Activated naive CD4-positive, alpha-beta T cell treated with anti-CD3 and anti-CD28 coated beads for 36 hours (primary cell): ENCODE measurements at regions of chr4 and their contacts with region 1.

Region 1: GRCh38 chr4:1351854-1352633 is 5.0 kb downstream of the UVSSA start:
- DNase-seq: peak; percentile 95
- H3K4me3 Mint-ChIP-seq: no peak overlapping the region
- H3K27ac Mint-ChIP-seq: no peak overlapping the region
- H3K4me1 Mint-ChIP-seq: peaks cover 30% of the 10 kb centered on the region
- H3K27me3 Mint-ChIP-seq: no peaks in the 10 kb centered on the region

Region 2: DNA sequence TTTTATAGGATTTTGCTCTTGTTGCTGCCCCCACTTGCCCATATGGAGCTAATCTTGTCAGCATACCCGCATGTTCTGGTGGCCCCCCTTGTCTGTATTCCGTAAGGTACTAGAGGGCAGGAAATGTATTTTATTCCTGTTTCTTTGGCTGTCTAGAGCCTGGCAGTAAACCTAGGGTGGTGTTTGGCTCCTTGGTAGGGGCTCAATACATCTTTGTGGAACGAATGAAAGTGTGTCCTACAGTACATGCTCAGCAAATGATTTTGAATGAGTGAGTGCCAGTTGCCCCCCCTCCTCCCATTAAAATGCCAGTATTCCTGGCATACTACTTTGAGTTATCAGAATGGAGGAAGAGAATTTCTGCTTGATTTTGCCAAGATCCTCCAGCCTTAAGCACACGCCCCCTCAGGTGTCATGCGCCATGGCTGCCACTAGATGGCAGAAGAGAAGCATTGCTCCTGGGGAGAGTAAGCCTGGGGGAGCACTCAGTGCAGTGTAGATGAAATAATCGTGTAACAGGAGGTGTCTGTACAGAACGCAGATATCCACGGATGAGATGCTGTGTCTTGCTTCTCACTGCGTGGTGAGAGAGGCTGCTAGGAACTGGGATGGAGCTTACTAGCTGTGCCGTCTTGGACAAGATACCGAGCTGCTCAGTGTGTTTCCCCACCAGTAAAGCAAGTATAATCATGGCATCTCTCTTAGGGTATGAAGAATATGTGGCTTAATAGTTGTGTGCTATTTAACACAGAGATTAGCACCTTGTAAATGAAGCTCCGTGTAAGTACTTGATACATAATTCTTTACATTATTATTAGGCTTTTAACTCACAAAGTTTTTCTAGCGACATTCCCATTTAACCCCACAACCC is 221.5 kb before region 1 on chr4:
- CTCF ChIA-PET with region 1: interaction called, 9 read pairs
- intact Hi-C with region 1: loop called (anchors 1 kb)
- DNase-seq: peak; percentile 80
- H3K4me3 Mint-ChIP-seq: no peak overlapping the region
- H3K27ac Mint-ChIP-seq: no peak overlapping the region
- H3K4me1 Mint-ChIP-seq: peaks cover 2% of the 10 kb centered on the region
- H3K27me3 Mint-ChIP-seq: peaks cover 4% of the 10 kb centered on the region

Region 3: DNA sequence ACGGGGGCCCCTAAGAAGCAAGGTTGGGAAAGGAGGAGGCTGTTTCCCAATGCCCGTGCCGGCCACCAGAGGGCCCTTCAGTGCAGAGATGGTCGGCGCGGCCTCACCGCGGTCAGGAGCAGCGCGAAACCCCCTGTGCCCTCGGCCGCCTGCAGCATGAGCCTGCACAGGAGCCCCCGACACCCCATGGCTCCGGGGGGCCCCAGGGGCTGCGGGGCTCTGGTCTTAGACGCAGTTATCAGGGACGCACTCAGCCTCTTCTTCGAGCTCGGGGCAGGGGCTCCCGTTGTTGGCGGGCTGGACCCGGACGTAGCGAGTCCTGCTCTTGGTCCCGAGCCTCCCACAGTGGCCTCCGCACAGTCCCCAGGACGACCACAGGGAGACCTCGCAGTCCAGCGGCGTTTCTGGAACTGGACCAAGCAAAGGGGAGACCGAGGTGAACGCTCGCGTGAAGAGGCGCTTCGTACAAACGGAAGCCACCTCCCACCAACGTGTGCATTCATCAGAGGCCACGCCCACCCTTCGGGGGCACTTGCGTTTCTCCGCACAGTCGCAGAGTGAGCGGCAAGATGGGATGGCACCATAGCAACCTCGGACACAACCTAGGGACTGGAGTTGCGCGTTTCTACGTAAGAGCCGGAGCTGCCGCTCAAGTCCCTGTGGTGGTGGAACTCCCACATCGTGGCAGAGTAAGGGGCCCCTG is 184.6 kb before region 1 on chr4:
- CTCF ChIA-PET with region 1: interaction called, 3 read pairs
- intact Hi-C with region 1: loop called (anchors 1 kb)
- DNase-seq: peak; percentile 93
- H3K4me3 Mint-ChIP-seq: peak overlapping the region; percentile 74
- H3K27ac Mint-ChIP-seq: no peak overlapping the region
- H3K4me1 Mint-ChIP-seq: peaks cover 18% of the 10 kb centered on the region
- H3K27me3 Mint-ChIP-seq: peaks cover 15% of the 10 kb centered on the region

Region 4: DNA sequence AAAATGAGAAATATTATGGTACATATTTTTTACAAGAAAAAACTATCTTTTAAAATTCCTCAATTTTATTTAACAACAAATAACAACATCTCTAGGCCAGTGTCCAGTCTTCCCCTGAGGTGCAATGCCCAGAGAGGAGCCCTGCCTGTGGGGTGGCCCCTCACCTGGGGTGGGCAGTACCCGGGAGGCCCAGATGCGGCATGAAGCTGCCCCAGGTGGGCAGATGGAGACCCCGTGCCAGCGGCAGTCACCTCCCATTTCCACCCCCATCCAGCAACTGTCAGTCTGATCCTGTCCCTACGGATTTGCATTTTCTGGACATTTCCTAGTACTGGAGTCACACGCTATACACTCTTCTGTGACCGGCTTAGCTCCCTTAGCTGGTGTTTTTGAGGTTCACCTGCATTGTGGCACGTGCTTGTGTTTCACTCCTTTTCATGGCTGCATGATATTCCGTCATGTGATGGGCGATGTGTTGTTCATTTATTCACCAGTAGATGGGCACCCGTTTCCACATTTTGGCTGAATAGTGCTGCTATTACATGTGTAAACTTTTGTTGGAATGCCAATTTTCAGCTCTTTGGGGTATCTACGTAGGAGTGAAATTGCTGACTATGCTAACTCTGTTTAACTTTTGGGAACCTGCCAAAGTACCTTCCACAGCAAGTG is 74.2 kb before region 1 on chr4:
- CTCF ChIA-PET with region 1: interaction called, 3 read pairs
- intact Hi-C with region 1: loop called (anchors 1 kb)
- DNase-seq: no peak
- H3K4me3 Mint-ChIP-seq: no peak overlapping the region
- H3K27ac Mint-ChIP-seq: no peak overlapping the region
- H3K4me1 Mint-ChIP-seq: no peaks in the 10 kb centered on the region
- H3K27me3 Mint-ChIP-seq: no peaks in the 10 kb centered on the region

Region 5: GRCh38 chr4:1512738-1513660 is 161.0 kb after region 1 on chr4:
- CTCF ChIA-PET with region 1: no interaction called
- intact Hi-C with region 1: loop called (anchors 10 kb)
- DNase-seq: peak; percentile 34
- H3K4me3 Mint-ChIP-seq: no peak overlapping the region
- H3K27ac Mint-ChIP-seq: no peak overlapping the region
- H3K4me1 Mint-ChIP-seq: no peaks in the 10 kb centered on the region
- H3K27me3 Mint-ChIP-seq: peaks cover under 1% of the 10 kb centered on the region

Region 6: DNA sequence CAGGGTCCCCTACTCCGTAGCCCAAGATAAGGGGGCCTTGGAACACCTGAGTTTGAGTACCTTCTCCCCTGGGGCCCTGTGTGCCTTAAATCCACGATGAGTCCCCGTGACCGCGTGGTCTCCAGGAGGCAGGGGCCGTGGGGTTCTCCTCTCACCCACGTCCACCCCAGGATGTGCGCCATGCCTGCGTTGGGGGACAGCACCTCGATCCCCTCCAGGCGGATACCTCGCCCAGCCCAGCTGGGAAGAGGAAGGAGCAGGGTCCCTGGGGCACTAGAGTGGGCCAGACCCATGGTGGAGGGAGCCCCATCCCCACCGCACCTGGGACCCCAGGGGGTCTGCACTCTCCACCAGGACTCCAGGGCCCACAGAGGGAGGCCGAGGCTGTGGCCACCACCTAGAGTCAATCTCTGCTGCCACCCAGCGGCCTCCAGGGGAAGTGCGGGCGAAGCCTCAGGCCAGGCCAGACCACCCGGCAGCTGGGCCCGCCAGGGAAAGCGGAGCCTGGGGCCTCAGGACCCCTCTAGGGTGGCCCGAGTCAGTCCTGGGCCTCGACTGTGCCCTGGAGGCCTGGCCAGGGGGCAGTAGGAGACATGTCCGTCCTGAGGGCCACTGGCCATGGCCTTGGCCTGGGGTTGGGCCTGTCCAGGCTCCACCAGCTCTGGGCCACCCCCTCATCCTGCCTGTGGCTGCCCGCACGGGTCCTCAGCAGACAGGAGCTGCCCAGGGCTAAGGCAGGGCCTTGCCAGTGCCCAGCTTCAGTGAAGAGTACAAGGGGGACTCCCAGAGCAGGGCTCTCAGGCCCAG is 277.1 kb after region 1 on chr4:
- CTCF ChIA-PET with region 1: interaction called, 7 read pairs
- intact Hi-C with region 1: loop called (anchors 2 kb)
- DNase-seq: peak; percentile 78
- H3K4me3 Mint-ChIP-seq: no peak overlapping the region
- H3K27ac Mint-ChIP-seq: no peak overlapping the region
- H3K4me1 Mint-ChIP-seq: no peaks in the 10 kb centered on the region
- H3K27me3 Mint-ChIP-seq: no peaks in the 10 kb centered on the region